ENCODE measurements at regions of chr3 and their contacts with region 1.

Region 1: GRCh38 chr3:185659942-185660921 is 74.1 kb downstream of the SENP2 start:
- DNase-seq: peak; percentile 78
- H3K4me3 ChIP-seq: peak overlapping the region in 1 of 2 experiments; percentile 18; a peak in 1 of 4 replicates
- H3K27ac ChIP-seq: peak overlapping the region in 1 of 2 experiments; percentile 95; a peak in 2 of 4 replicates
- H3K4me1 ChIP-seq: peaks cover 3 to 52% of the 10 kb centered on the region in 2 experiments; a peak in 3 of 4 replicates
- H3K27me3 ChIP-seq: no peaks in the 10 kb centered on the region
- CTCF ChIP-seq: peak; percentile 99
- EP300 ChIP-seq: no peak
- RAD21 ChIP-seq: peak; percentile 92

Region 2: GRCh38 chr3:185131602-185132256 is 528.5 kb before region 1 on chr3:
- CTCF ChIA-PET with region 1: no interaction called
- POLR2A ChIA-PET with region 1: no interaction called
- DNase-seq: no peak
- H3K4me3 ChIP-seq: no peak overlapping the region
- H3K27ac ChIP-seq: no peak overlapping the region
- H3K4me1 ChIP-seq: no peaks in the 10 kb centered on the region
- H3K27me3 ChIP-seq: no peaks in the 10 kb centered on the region; the same call in 1 of the 2 replicates
- CTCF ChIP-seq: no peak
- EP300 ChIP-seq: no peak
- RAD21 ChIP-seq: no peak

Region 3: DNA sequence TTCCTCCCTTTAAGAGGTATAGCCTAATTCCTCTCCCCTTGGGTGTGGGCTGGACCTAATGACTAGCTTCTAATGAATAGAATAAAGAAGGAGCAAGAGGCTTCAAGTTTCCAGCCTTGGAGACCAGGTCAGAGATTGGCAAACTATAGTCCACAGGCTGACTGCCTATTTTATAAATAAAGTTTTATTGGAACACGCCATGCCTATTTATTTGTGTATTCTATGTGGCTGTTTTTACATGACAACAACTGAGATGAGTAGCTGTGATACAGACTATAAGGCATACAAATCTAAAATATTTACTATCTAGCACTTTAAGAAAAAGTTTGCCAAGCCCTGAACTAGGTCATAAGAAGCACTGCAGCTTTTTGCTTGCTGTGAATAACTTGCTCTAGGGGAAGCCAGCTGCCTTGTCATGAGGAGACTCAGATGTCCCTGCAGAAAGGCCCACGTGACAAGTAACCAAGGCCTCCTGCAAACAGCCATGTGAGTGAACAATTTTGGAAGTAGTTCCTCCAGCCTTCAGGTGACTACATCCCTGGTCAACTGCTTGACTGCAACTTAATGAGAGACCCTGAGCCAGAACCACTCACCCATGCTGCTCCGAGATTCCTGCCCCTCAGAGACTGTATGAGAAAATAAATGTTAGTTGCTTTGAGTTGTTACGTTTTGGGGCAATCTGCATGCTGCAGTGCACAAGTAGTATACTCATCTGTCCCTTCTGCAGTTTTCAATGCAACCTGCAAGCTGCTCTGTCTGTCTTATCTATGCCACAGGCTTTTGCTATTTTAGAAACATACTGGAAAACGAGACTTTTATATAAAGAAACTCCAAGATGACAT is 318.4 kb before region 1 on chr3:
- CTCF ChIA-PET with region 1: no interaction called
- POLR2A ChIA-PET with region 1: no interaction called
- DNase-seq: no peak
- H3K4me3 ChIP-seq: no peak overlapping the region
- H3K27ac ChIP-seq: no peak overlapping the region
- H3K4me1 ChIP-seq: no peaks in the 10 kb centered on the region
- H3K27me3 ChIP-seq: no peaks in the 10 kb centered on the region
- CTCF ChIP-seq: no peak
- EP300 ChIP-seq: no peak
- RAD21 ChIP-seq: no peak

Region 4: GRCh38 chr3:185645596-185646381 is 14.4 kb before region 1 on chr3:
- CTCF ChIA-PET with region 1: interaction called, 36 read pairs
- POLR2A ChIA-PET with region 1: no interaction called
- DNase-seq: peak; percentile 36
- H3K4me3 ChIP-seq: no peak overlapping the region
- H3K27ac ChIP-seq: no peak overlapping the region
- H3K4me1 ChIP-seq: peaks cover 0 to 4% of the 10 kb centered on the region in 2 experiments; a peak in 1 of 4 replicates
- H3K27me3 ChIP-seq: no peaks in the 10 kb centered on the region
- CTCF ChIP-seq: no peak
- EP300 ChIP-seq: no peak
- RAD21 ChIP-seq: no peak

Region 5: GRCh38 chr3:185693985-185694653 is 33.9 kb after region 1 on chr3:
- CTCF ChIA-PET with region 1: interaction called, 20 read pairs
- POLR2A ChIA-PET with region 1: no interaction called
- DNase-seq: no peak
- H3K4me3 ChIP-seq: no peak overlapping the region
- H3K27ac ChIP-seq: peak overlapping the region in 1 of 2 experiments; percentile 87; a peak in 2 of 4 replicates
- H3K4me1 ChIP-seq: peaks cover 0 to 38% of the 10 kb centered on the region in 2 experiments; a peak in 3 of 4 replicates
- H3K27me3 ChIP-seq: no peaks in the 10 kb centered on the region
- CTCF ChIP-seq: no peak
- EP300 ChIP-seq: no peak
- RAD21 ChIP-seq: no peak

Region 6: DNA sequence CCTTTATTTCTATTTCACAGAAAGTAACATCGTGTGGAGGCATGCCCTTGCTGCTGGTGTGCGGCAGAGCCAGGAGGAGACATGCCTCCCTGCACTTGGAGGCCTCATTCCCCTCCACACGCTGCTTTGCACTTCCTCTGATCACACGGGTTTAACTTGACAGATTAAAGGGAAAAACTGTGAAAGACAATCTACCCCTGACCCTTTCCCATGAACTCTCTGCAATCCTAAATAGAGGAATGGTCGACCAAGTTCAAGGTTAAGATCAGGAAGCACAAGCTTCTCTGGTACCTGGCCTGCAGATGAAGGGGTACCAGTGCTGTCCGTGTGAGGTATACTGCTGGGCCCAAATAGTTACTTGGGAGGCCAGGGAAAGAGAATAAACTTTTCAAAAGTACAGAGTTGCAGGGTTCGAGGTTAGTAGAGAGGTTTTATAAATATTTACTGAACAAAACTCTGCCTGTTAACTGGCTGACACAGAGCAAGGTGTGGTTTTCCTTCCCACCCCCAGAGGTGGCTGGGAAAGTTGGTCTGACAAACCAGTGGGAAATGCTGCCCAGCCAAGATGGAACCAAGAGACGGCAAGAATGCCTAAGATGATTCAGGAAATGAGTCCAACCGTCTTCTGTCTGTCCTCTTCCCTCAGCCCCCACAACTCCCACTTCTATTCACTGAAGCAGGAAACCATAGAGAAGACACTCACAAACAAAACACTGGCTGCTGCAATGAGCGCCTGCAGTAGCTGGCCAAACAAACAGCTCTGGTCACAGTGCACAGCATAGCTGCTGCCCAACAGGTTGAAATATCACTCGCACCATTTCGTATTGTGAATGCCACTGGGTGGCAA is 85.0 kb after region 1 on chr3:
- CTCF ChIA-PET with region 1: interaction called, 14 read pairs
- POLR2A ChIA-PET with region 1: no interaction called
- DNase-seq: no peak
- H3K4me3 ChIP-seq: no peak overlapping the region
- H3K27ac ChIP-seq: peak overlapping the region in 1 of 2 experiments; percentile 98; a peak in 2 of 4 replicates
- H3K4me1 ChIP-seq: peaks cover 0 to 28% of the 10 kb centered on the region in 2 experiments; a peak in 2 of 4 replicates
- H3K27me3 ChIP-seq: no peaks in the 10 kb centered on the region
- CTCF ChIP-seq: no peak
- EP300 ChIP-seq: no peak; a peak in 1 of 4 replicates
- RAD21 ChIP-seq: no peak

Region 7: GRCh38 chr3:185781759-185782158 is 121.5 kb after region 1 on chr3:
- CTCF ChIA-PET with region 1: interaction called, 38 read pairs
- POLR2A ChIA-PET with region 1: no interaction called
- DNase-seq: no peak
- H3K4me3 ChIP-seq: 0 out of 4 replicates have a peak overlapping the region, but pooled peaks of 1 of the 2 experiments have one; percentile 6
- H3K27ac ChIP-seq: peak overlapping the region in 1 of 2 experiments; percentile 87; a peak in 3 of 4 replicates
- H3K4me1 ChIP-seq: peaks cover 0 to 12% of the 10 kb centered on the region in 2 experiments; a peak in 1 of 4 replicates
- H3K27me3 ChIP-seq: no peaks in the 10 kb centered on the region
- CTCF ChIP-seq: no peak
- EP300 ChIP-seq: peak in 1 of 2 experiments; percentile 44; a peak in 2 of 4 replicates
- RAD21 ChIP-seq: no peak

Region 8: GRCh38 chr3:185878920-185879319 is 218.7 kb after region 1 on chr3:
- CTCF ChIA-PET with region 1: no interaction called
- POLR2A ChIA-PET with region 1: no interaction called
- DNase-seq: no peak
- H3K4me3 ChIP-seq: no peak overlapping the region
- H3K27ac ChIP-seq: no peak overlapping the region
- H3K4me1 ChIP-seq: no peaks in the 10 kb centered on the region
- H3K27me3 ChIP-seq: no peaks in the 10 kb centered on the region
- CTCF ChIP-seq: no peak
- EP300 ChIP-seq: no peak
- RAD21 ChIP-seq: no peak

Measured in SK-N-SH (cell line).